ENCODE measurements at regions of chr17 and their contacts with region 1.

Region 1: DNA sequence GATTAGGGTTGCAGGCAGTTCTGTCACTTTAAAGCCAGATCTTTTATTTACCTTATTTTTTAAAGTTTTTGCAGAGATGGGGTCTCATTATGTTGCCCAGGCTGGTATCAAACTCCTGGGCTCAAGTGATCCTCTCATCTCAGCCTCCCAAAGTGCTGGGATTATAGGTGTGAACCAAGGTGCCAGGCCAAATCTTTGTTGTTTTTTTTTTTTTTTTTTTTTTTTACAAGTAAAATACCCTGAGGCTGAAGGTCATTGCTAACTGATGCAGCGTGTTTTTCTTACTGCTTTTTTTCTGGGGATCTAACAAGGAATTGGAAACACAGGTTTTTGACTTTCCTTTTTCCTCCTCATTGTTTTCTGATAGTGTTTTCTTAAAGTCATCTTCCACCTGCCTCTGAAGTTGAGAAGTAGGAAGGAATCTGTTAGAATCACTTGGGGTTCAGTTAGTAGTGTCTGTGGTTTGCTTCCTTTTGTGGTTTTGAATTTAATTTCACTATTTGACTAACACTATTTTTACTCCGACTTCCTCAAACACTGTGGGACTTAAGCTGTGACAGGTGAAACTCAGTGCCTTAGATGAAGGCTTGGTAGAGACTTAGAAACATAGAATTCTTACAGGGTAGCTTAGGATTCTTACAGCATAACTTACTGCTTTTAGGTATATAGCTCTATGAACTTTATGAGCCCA is 22.2 kb downstream of the CLTC start:
- DNase-seq: peak in 6 of 9 donors; percentile 24 to 51 (median 44)
- ATAC-seq: peak; percentile 86
- H3K4me3 ChIP-seq: no peak overlapping the region
- H3K4me3 Mint-ChIP-seq: peak overlapping the region; percentile 16 to 81 (median 76)
- H3K27ac ChIP-seq: no peak overlapping the region
- H3K27ac Mint-ChIP-seq: peak overlapping the region; percentile 7 to 89 (median 64)
- H3K4me1 ChIP-seq: peaks cover 17 to 20% of the 10 kb centered on the region in 2 donors
- H3K4me1 Mint-ChIP-seq: peaks cover 34 to 70% (median 65%) of the 10 kb centered on the region in 7 donors
- H3K27me3 ChIP-seq: no peaks in the 10 kb centered on the region
- H3K27me3 Mint-ChIP-seq: no peaks in the 10 kb centered on the region

Region 2: GRCh38 chr17:59521204-59522126 is 120.5 kb before region 1 on chr17:
- CTCF ChIA-PET with region 1: no interaction called
- POLR2A ChIA-PET with region 1: no interaction called
- intact Hi-C with region 1: loop called in 1 of 2 experiments (anchors 5 kb)
- DNase-seq: peak; percentile 17 to 69 (median 38)
- ATAC-seq: peak; percentile 85
- H3K4me3 ChIP-seq: no peak overlapping the region
- H3K4me3 Mint-ChIP-seq: no peak overlapping the region
- H3K27ac ChIP-seq: no peak overlapping the region
- H3K27ac Mint-ChIP-seq: no peak overlapping the region
- H3K4me1 ChIP-seq: no peaks in the 10 kb centered on the region
- H3K4me1 Mint-ChIP-seq: peaks cover 0 to 6% (median 5%) of the 10 kb centered on the region in 7 donors
- H3K27me3 ChIP-seq: peaks cover 0 to 3% of the 10 kb centered on the region in 2 donors
- H3K27me3 Mint-ChIP-seq: peaks cover 4 to 22% (median 10%) of the 10 kb centered on the region in 5 donors

Measured in naive thymus-derived CD4-positive, alpha-beta T cell (primary cell).